Activated B cell treated with CpG ODN at 0.5 μM for 24 hours (primary cell): ENCODE measurements at regions of chr19 and their contacts with region 1.

Region 1: GRCh38 chr19:57279418-57280066 is 743 bp upstream of the ZNF460 start:
- DNase-seq: peak; percentile 62
- ATAC-seq: peak; percentile 72
- H3K4me3 Mint-ChIP-seq: no peak overlapping the region
- H3K27ac Mint-ChIP-seq: no peak overlapping the region
- H3K4me1 Mint-ChIP-seq: peaks cover 44% of the 10 kb centered on the region
- H3K27me3 Mint-ChIP-seq: no peaks in the 10 kb centered on the region
- CTCF ChIP-seq: no peak

Region 2: DNA sequence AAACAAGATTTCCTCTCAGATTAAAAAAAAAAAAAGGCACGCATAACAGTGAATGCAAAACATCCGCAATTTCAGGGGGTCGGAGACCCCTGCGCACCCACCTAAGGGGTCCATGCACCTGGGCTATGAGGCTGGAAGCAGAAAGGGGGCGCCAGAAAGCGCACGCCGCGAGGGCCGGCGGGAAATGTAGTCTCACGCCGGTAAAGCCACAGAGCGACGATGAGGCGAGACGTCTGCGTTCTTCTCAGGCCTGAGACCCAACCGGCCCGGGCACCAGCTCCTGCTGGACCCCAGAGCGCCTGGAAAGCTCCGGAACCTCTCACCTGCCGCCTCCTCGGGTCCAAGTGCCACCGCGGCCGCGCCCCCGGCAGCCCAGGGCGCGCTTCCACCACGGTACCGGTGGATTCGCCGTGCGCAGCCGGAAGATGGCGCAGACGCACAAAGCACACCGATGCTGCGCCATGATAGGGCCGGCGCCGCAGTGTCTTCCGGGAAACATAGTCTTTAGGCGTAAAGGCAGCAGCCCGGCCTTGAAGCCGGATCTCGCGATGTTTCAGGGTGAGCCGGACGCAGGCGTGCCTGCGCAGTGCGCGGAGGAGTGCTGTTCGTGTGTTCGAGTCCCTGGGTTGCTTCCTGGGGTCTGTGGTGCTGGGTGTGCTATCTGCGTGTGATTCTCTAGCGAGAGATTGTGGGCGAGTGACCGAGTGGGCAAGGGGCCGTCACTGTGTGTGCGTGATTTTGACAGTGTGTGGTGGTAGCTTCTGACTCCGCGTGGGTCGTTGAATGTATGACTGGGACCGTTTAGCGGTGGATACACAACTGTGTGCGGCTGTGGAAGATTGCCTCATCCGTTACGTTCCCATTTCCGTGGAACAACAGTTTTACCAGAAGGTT is 886.2 kb before region 1 on chr19 and contains the start of gene ZNF582:
- CTCF ChIA-PET with region 1: no interaction called
- POLR2A ChIA-PET with region 1: no interaction called
- intact Hi-C with region 1: loop called (anchors 2 kb)
- DNase-seq: peak; percentile 85
- ATAC-seq: peak; percentile 96
- H3K4me3 Mint-ChIP-seq: peak within 1 kb of the TSS; percentile 97
- H3K27ac Mint-ChIP-seq: peak within 1 kb of the TSS; percentile 96
- H3K4me1 Mint-ChIP-seq: peaks cover 13% of the 10 kb centered on the region
- H3K27me3 Mint-ChIP-seq: no peaks in the 10 kb centered on the region
- CTCF ChIP-seq: no peak
- total RNA-seq, gene ZNF582: 7.4 and 7.9 TPM in 2 replicates

Region 3: DNA sequence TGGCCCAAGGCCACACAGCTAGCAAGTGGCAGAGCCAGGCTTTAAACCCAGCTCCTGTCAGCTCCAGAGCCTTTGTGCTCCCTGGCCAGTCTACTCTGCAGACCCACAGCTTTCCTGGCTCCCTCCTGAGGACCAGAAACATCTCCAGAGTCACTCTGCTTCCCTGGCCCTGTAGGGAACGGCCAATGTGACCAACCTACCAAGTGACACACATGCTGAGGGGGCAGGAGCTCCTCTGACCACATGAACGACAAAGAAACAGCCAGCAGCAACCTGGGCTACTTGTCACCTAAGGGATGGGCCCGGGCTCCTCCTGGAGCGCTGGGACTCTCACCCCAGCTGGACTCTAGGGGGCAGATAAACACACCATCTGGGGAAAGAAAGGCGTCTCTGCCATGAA is 458.3 kb before region 1 on chr19:
- CTCF ChIA-PET with region 1: no interaction called
- POLR2A ChIA-PET with region 1: no interaction called
- intact Hi-C with region 1: no loop called
- DNase-seq: no peak
- ATAC-seq: no peak
- H3K4me3 Mint-ChIP-seq: no peak overlapping the region
- H3K27ac Mint-ChIP-seq: no peak overlapping the region
- H3K4me1 Mint-ChIP-seq: no peaks in the 10 kb centered on the region
- H3K27me3 Mint-ChIP-seq: no peaks in the 10 kb centered on the region
- CTCF ChIP-seq: no peak

Region 4: DNA sequence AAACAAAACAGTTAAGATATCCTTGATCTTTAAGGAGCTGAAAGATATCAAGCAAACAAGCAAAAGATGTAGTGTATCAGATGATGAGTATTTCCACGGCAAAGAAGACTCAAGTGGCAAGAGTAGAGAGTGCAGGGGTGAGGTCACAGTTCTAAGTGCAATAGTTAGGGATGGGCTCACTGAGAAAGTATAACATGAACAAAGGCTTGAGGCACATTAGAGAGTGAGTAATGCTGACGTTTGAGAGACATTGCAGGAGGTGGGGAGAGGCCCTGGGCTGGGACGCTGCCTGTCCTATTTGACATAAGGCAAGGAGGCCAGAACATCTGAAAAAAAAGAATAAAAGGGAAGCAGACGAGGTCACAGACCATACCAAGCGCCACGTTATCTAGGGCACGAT is 113.7 kb before region 1 on chr19:
- CTCF ChIA-PET with region 1: no interaction called
- POLR2A ChIA-PET with region 1: no interaction called
- intact Hi-C with region 1: no loop called
- DNase-seq: no peak
- ATAC-seq: no peak
- H3K4me3 Mint-ChIP-seq: no peak overlapping the region
- H3K27ac Mint-ChIP-seq: no peak overlapping the region
- H3K4me1 Mint-ChIP-seq: no peaks in the 10 kb centered on the region
- H3K27me3 Mint-ChIP-seq: peaks cover 2% of the 10 kb centered on the region
- CTCF ChIP-seq: no peak

Region 5: DNA sequence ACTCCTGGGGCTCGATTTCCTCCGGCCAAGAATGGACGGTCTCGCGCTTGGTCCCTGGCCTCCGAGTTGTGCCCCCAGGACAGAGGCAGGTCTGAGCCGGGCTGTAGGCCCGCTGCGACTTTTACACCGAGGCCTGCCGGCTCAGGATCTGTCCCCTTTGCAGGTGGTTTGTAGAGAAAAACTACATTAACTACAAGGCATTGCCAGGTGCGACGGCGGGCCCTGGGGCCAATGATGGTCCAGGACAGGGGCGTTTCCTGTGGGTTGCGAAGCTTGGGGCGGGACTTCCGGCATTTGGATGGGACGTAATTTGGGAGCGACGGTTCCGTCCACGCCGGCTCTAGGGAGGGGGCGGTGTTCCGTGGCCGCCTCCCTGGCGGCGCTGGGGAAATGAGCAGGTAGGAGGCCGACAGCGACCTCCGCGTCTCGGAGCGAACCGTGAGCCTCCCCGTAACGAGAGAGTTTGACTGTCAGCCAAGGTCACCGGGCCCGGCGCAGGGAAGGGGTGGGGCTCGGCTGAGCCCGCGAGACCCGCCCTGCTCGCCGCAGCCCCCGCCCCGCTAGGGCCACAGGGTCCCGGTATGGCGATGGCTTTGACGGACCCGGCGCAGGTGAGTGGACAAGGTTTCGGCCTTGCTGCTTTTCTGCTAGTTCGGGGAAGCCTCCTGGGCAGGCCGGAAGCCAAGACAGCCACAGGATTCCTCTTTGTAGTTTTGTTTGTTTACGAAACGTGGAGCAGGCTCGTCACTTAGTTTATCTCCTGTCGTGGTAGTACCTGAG is 39.0 kb before region 1 on chr19 and contains the start of gene ZNF805:
- CTCF ChIA-PET with region 1: no interaction called
- POLR2A ChIA-PET with region 1: interaction called, 12 read pairs
- intact Hi-C with region 1: loop called (anchors 1 kb)
- DNase-seq: peak; percentile 90
- ATAC-seq: peak; percentile 93
- H3K4me3 Mint-ChIP-seq: peak within 1 kb of the TSS; percentile 95
- H3K27ac Mint-ChIP-seq: peak within 1 kb of the TSS; percentile 93
- H3K4me1 Mint-ChIP-seq: peaks cover 39% of the 10 kb centered on the region
- H3K27me3 Mint-ChIP-seq: no peaks in the 10 kb centered on the region
- CTCF ChIP-seq: no peak
- total RNA-seq, gene ZNF805: 20.3 and 25.9 TPM in 2 replicates

Region 6: GRCh38 chr19:57350877-57351805 is 71.6 kb after region 1 on chr19 and contains the start of gene ZNF304:
- CTCF ChIA-PET with region 1: no interaction called
- POLR2A ChIA-PET with region 1: no interaction called
- intact Hi-C with region 1: loop called (anchors 1 kb)
- DNase-seq: peak; percentile 66
- ATAC-seq: peak; percentile 100
- H3K4me3 Mint-ChIP-seq: peak within 1 kb of the TSS; percentile 94
- H3K27ac Mint-ChIP-seq: peak within 1 kb of the TSS; percentile 78
- H3K4me1 Mint-ChIP-seq: peaks cover 33% of the 10 kb centered on the region
- H3K27me3 Mint-ChIP-seq: peaks cover 3% of the 10 kb centered on the region
- CTCF ChIP-seq: no peak
- total RNA-seq, gene ZNF304: 12.4 and 13.5 TPM in 2 replicates

Region 7: GRCh38 chr19:57559404-57560025 is 280.0 kb after region 1 on chr19 and contains the start of gene ZNF550:
- CTCF ChIA-PET with region 1: no interaction called
- POLR2A ChIA-PET with region 1: no interaction called
- intact Hi-C with region 1: loop called (anchors 1 kb)
- DNase-seq: peak; percentile 83
- ATAC-seq: peak; percentile 98
- H3K4me3 Mint-ChIP-seq: peak within 1 kb of the TSS; percentile 92
- H3K27ac Mint-ChIP-seq: peak within 1 kb of the TSS; percentile 69
- H3K4me1 Mint-ChIP-seq: peaks cover 33% of the 10 kb centered on the region
- H3K27me3 Mint-ChIP-seq: no peaks in the 10 kb centered on the region
- CTCF ChIP-seq: no peak
- total RNA-seq, gene ZNF550: 16.8 and 18.7 TPM in 2 replicates

Region 8: DNA sequence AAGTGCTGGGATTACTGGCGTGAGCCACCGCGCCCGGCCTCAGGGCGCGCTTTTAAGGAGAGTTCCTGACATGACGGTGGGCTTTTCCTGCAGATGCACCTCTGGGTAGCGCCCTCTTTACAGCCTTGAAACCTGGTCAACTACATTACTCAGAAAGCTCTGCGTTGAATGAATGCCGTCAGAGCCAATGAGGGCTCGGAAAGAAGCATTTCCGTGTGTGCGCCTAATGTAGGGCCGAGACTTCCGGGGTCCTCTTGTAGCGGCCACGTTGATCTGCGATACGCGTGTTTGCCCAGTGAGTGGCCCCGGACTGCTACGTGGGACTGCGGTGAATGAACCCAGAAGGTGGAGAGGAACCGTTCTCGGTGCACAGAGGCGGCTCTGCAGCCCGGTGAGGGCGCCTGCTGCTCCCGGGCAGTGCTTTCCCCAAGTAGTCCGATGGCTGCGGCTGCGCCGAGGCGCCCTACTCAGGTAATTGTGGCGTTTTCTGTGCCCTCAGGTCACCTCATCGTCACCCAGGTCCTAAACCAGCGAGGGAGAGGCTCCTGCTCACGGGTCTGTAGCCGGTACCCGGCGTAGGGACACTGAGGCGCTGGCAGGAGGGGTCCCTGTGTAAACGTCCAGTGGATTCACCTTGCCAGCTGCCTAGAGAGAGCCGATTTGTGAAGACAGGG is 540.1 kb after region 1 on chr19:
- CTCF ChIA-PET with region 1: no interaction called
- POLR2A ChIA-PET with region 1: no interaction called
- intact Hi-C with region 1: loop called (anchors 5 kb)
- DNase-seq: peak; percentile 60
- ATAC-seq: peak; percentile 84
- H3K4me3 Mint-ChIP-seq: peak overlapping the region; percentile 98
- H3K27ac Mint-ChIP-seq: peak overlapping the region; percentile 97
- H3K4me1 Mint-ChIP-seq: peaks cover 55% of the 10 kb centered on the region
- H3K27me3 Mint-ChIP-seq: no peaks in the 10 kb centered on the region
- CTCF ChIP-seq: no peak